Esophagus squamous epithelium (tissue), 5 donors: ENCODE measurements at regions of chr5 and their contacts with region 1.

Region 1: DNA sequence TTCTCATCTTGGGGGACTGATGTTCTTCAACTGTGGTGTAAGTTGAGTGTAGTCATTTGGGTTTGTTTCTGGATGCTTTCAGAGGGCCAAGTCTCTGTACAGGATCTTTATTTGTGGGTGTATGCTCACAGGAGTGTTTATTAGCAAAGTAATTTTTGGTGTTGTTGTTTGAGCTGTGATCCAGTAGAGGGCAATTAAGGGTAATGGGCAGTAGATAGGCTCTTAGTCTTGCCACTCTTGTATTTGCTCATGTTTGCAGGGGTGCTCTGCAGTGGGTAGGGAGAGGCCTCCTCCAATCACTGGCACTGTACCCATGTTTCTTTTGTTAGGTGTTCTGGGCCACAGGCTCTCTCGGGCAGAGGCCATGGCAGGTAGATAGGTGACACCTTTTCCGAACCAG is 45.9 kb upstream of the ITGA2 start:
- DNase-seq: no peak
- H3K4me3 ChIP-seq: no peak overlapping the region
- H3K27ac ChIP-seq: peak overlapping the region in 1 of 4 donors; percentile 44
- H3K4me1 ChIP-seq: peaks cover 0 to 38% (median 4%) of the 10 kb centered on the region in 3 donors
- H3K27me3 ChIP-seq: no peaks in the 10 kb centered on the region
- CTCF ChIP-seq: peak in 1 of 6 experiments; percentile 26
- POLR2A ChIP-seq: no peak

Region 2: GRCh38 chr5:53109443-53110127 is 166.3 kb after region 1 on chr5 and contains the start of gene MOCS2:
- intact Hi-C with region 1: loop called (anchors 5 kb)
- DNase-seq: peak; percentile 12
- H3K4me3 ChIP-seq: peak within 1 kb of the TSS; percentile 58 to 83 (median 77)
- H3K27ac ChIP-seq: peak within 1 kb of the TSS; percentile 77 to 91 (median 84)
- H3K4me1 ChIP-seq: peaks cover 6 to 34% (median 6%) of the 10 kb centered on the region in 3 donors
- H3K27me3 ChIP-seq: no peaks in the 10 kb centered on the region
- CTCF ChIP-seq: peak in 1 of 6 experiments; percentile 53
- POLR2A ChIP-seq: peak in 3 of 4 donors; percentile 61 to 80 (median 77)
- total RNA-seq, gene MOCS2: 13.2 to 29.6 (median 25.4) TPM